ENCODE measurements at regions of chr15 and their contacts with region 1.

Region 1: DNA sequence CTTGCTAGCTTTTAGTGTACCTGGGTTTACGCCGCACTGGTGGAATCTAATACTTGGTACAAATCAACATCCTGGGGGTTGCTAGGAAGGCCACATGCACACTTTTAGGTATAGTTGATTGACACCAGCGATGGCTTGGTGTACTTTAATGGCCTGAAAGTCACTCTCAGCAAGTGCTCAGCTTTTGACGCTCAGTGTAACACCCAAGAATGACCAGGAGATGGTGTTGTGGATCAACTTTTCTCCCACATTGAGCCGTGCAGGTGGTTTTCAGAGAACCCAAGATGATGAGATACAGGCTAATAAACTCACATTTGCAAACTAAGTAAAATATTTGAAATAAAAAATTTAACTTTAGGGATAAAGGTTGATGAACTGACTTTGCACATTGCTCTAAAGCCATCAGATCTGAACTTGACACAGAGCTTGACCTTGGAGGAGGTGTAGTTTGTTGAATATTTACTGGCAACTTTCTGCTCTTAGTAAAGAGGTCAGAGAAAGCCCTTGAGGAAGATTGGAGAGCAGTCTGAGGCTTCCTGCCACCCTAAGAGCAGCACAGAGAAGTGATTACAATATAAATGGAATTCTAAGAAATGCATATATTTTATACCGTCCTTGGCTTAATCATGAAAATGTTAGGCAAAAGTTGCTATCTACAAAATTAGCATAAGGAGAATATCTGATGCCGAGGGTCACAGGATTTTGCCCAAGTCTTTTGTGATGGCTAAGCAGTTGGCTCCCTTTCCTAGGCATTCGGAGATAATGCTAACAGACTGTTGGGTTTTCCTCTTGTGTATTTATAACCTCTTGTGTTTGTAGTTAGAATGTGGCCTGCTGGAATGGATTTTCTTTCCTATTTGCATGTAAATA is 143.4 kb upstream of the RASGRP1 start:
- DNase-seq: peak in 5 of 9 experiments; percentile 30 to 71 (median 40)
- ATAC-seq: peak; percentile 89
- H3K4me3 ChIP-seq: no peak overlapping the region
- H3K4me3 Mint-ChIP-seq: no peak overlapping the region
- H3K27ac ChIP-seq: no peak overlapping the region
- H3K27ac Mint-ChIP-seq: no peak overlapping the region
- H3K4me1 ChIP-seq: no peaks in the 10 kb centered on the region
- H3K4me1 Mint-ChIP-seq: no peaks in the 10 kb centered on the region
- H3K27me3 ChIP-seq: no peaks in the 10 kb centered on the region
- H3K27me3 Mint-ChIP-seq: no peaks in the 10 kb centered on the region
- CTCF ChIP-seq: peak; percentile 73

Region 2: DNA sequence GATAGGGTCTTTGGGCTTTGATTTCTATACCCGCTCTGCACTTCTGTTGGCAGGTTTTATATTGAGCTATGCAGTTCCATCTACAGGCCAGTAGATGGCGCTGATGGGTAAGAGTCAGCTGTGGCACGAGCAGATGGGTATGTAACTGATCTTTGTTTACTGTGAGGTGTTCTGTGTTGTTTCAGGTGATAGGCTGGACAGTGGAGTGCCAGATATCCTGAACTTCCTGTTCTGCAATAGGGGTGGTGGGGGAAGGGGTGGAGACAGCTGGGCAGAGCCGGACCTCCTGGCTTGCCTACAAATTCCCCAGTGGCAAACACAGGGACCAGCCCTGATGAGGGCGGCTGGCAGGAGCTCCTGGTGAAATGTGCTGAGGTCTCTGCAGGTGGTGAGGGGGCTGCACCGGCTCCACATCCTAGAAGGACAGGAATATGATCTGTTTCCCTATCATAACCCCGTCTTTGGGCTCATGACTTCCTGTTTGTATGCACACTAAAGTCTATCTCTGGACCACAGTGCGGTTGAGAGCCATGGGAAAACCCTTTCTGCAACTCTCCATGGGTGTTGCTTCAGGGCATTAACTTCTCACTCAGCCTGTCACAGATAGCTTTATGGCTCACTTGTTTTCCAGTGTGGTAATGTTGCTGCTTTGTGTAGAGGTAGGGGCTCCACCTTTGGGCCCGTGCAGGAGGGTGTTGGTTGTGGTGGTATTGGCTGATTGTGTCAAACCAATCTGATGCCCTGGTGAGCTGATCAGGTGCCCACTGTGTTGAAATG is 267.5 kb before region 1 on chr15:
- CTCF ChIA-PET with region 1: interaction called, 18 read pairs
- POLR2A ChIA-PET with region 1: no interaction called
- intact Hi-C with region 1: no loop called
- DNase-seq: peak in 8 of 9 experiments; percentile 24 to 84 (median 51)
- ATAC-seq: peak; percentile 99
- H3K4me3 ChIP-seq: no peak overlapping the region
- H3K4me3 Mint-ChIP-seq: no peak overlapping the region
- H3K27ac ChIP-seq: no peak overlapping the region
- H3K27ac Mint-ChIP-seq: no peak overlapping the region
- H3K4me1 ChIP-seq: peaks cover 4% of the 10 kb centered on the region
- H3K4me1 Mint-ChIP-seq: peaks cover 3% of the 10 kb centered on the region
- H3K27me3 ChIP-seq: no peaks in the 10 kb centered on the region
- H3K27me3 Mint-ChIP-seq: peaks cover 28% of the 10 kb centered on the region
- CTCF ChIP-seq: peak; percentile 98

Region 3: DNA sequence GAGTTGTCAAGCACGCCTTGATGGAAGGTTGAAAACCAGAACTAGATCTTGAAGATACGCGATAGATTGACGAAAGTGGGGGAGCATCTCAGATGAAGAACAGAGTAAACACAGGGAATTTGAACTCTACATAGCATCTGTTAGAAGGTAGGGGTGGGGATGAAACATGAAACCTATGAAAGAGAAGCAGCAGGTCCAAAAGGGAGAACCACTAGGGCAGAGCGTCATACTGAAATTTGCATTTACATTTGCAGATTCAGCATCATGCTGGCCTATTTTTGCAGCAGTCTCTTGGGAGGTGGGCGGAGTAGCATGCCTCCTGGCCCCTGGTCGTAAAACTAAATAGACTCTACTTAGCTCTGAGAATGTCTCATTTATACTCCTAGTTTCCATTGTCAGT is 97.3 kb before region 1 on chr15:
- CTCF ChIA-PET with region 1: no interaction called
- POLR2A ChIA-PET with region 1: no interaction called
- intact Hi-C with region 1: no loop called
- DNase-seq: peak in 3 of 9 experiments; percentile 28 to 53 (median 28)
- ATAC-seq: peak; percentile 78
- H3K4me3 ChIP-seq: no peak overlapping the region
- H3K4me3 Mint-ChIP-seq: peak overlapping the region; percentile 13
- H3K27ac ChIP-seq: peak overlapping the region in 1 of 2 experiments; percentile 69
- H3K27ac Mint-ChIP-seq: peak overlapping the region; percentile 93
- H3K4me1 ChIP-seq: peaks cover 41% of the 10 kb centered on the region
- H3K4me1 Mint-ChIP-seq: peaks cover 54% of the 10 kb centered on the region
- H3K27me3 ChIP-seq: no peaks in the 10 kb centered on the region
- H3K27me3 Mint-ChIP-seq: no peaks in the 10 kb centered on the region
- CTCF ChIP-seq: no peak

Region 4: GRCh38 chr15:38745126-38745525 is 37.1 kb after region 1 on chr15:
- CTCF ChIA-PET with region 1: no interaction called
- POLR2A ChIA-PET with region 1: no interaction called
- intact Hi-C with region 1: no loop called
- DNase-seq: no peak
- ATAC-seq: no peak
- H3K4me3 ChIP-seq: no peak overlapping the region
- H3K4me3 Mint-ChIP-seq: no peak overlapping the region
- H3K27ac ChIP-seq: no peak overlapping the region
- H3K27ac Mint-ChIP-seq: no peak overlapping the region
- H3K4me1 ChIP-seq: no peaks in the 10 kb centered on the region
- H3K4me1 Mint-ChIP-seq: no peaks in the 10 kb centered on the region
- H3K27me3 ChIP-seq: no peaks in the 10 kb centered on the region
- H3K27me3 Mint-ChIP-seq: peaks cover 5% of the 10 kb centered on the region
- CTCF ChIP-seq: no peak

Region 5: DNA sequence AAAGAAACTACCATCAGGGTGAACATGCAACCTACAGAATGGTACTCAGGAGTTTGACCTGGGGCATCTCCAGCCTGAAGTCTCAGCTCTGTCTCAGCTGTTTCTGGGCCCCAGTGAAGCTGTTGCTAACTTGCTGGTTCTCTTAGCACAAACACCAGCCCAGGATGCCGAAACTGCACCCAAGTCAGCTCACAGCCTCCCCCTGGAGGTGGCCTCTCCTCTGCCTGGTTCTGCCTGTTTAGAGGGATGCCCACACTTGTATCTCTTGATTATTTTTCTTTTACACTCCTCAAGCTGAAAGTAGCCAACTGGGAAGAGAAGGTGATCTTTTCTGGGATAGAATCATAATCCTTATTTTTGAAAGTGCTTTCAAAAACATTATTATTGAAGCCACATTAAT is 145.6 kb after region 1 on chr15:
- CTCF ChIA-PET with region 1: interaction called, 8 read pairs
- POLR2A ChIA-PET with region 1: no interaction called
- intact Hi-C with region 1: loop called in 1 of 2 experiments (anchors 5 kb)
- DNase-seq: peak in 7 of 9 experiments; percentile 2 to 51 (median 31)
- ATAC-seq: no peak
- H3K4me3 ChIP-seq: no peak overlapping the region
- H3K4me3 Mint-ChIP-seq: no peak overlapping the region
- H3K27ac ChIP-seq: no peak overlapping the region
- H3K27ac Mint-ChIP-seq: no peak overlapping the region
- H3K4me1 ChIP-seq: no peaks in the 10 kb centered on the region
- H3K4me1 Mint-ChIP-seq: no peaks in the 10 kb centered on the region
- H3K27me3 ChIP-seq: no peaks in the 10 kb centered on the region
- H3K27me3 Mint-ChIP-seq: peaks cover 23% of the 10 kb centered on the region
- CTCF ChIP-seq: no peak

Region 6: DNA sequence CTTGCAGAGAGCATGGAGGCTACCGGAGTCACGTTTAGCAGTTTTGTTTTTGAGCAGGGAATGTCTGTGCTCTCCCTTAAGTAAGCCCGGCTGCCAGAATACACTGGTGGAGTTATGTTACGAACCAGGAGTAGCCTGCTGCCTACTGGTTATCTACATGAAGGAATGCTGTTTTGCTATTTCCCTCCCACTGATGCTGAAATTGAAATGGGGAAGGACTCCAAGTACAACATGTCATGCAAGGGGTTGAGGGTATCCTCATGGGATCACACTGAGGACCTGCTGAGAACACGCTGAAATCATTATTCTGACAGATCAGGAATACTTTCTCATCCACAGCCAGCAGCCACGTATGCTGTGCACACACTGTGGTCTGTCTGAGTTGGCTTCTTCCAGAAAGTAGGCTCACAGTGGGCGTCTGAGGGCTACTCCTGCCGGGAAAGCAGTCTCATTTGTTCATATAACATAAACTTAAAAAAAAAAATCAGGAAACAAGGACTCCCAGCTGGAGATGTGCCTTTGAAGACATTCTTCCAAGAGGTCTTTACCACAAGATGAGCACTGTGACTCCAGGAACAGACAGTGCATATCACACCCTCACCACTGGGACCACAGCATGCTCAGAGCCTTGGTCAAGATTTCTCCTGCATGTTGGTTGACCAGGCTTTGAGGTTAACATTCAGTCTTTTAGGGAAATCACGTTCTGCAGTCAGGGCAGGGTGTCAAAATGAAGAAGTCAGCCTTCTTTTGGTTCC is 157.0 kb after region 1 on chr15:
- CTCF ChIA-PET with region 1: no interaction called
- POLR2A ChIA-PET with region 1: interaction called, 4 read pairs
- intact Hi-C with region 1: loop called in 1 of 2 experiments (anchors 5 kb)
- DNase-seq: no peak
- ATAC-seq: no peak
- H3K4me3 ChIP-seq: no peak overlapping the region
- H3K4me3 Mint-ChIP-seq: no peak overlapping the region
- H3K27ac ChIP-seq: no peak overlapping the region
- H3K27ac Mint-ChIP-seq: no peak overlapping the region
- H3K4me1 ChIP-seq: no peaks in the 10 kb centered on the region
- H3K4me1 Mint-ChIP-seq: no peaks in the 10 kb centered on the region
- H3K27me3 ChIP-seq: no peaks in the 10 kb centered on the region
- H3K27me3 Mint-ChIP-seq: peaks cover 19% of the 10 kb centered on the region
- CTCF ChIP-seq: no peak

Region 7: DNA sequence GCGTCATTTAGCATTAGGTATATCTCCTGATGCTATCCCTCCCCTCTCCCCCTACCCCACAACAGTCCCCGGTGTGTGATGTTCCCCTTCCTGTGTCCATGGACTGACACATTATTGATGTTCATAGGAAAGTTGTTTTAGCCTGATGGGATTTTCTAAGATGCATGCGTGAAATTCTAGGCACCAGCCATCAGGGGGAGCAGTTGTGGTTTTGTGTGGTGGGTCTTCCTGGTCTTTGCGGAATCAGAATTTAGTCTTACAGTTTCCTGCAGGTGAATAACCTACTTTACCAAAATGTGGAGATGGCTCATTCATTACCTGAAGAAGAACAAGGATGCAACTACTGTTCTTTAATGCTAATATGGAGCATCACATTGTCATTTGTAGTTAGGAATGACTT is 417.9 kb after region 1 on chr15:
- CTCF ChIA-PET with region 1: no interaction called
- POLR2A ChIA-PET with region 1: no interaction called
- intact Hi-C with region 1: loop called in 1 of 2 experiments (anchors 5 kb)
- DNase-seq: peak in 7 of 9 experiments; percentile 10 to 62 (median 22)
- ATAC-seq: no peak
- H3K4me3 ChIP-seq: no peak overlapping the region
- H3K4me3 Mint-ChIP-seq: no peak overlapping the region
- H3K27ac ChIP-seq: no peak overlapping the region
- H3K27ac Mint-ChIP-seq: no peak overlapping the region
- H3K4me1 ChIP-seq: no peaks in the 10 kb centered on the region
- H3K4me1 Mint-ChIP-seq: peaks cover 3% of the 10 kb centered on the region
- H3K27me3 ChIP-seq: no peaks in the 10 kb centered on the region
- H3K27me3 Mint-ChIP-seq: peaks cover 20% of the 10 kb centered on the region
- CTCF ChIP-seq: peak; percentile 59

Measured in CD8-positive, alpha-beta T cell (primary cell).